Activated T-helper 2 cell treated with anti-CD3 and anti-CD28 coated beads, Interferon-gamma antibody, Interleukin-2, Interleukin-4, amounts not matched to agents 10 μg/mL and 5 μg/mL and 100 μg/mL, durations not matched to agents 14 hours and 24 hours and 36 hours (primary cell): ENCODE measurements at regions of chr1 and their contacts with region 1.

Region 1: GRCh38 chr1:171919891-171920887 is 78.9 kb downstream of the DNM3 start:
- DNase-seq: no peak
- H3K4me3 Mint-ChIP-seq: no peak overlapping the region
- H3K27ac Mint-ChIP-seq: no peak overlapping the region
- H3K4me1 Mint-ChIP-seq: peaks cover 6% of the 10 kb centered on the region
- H3K27me3 Mint-ChIP-seq: no peaks in the 10 kb centered on the region

Region 2: GRCh38 chr1:171877701-171878100 is 42.5 kb before region 1 on chr1:
- intact Hi-C with region 1: loop called (anchors 5 kb)
- DNase-seq: no peak
- H3K4me3 Mint-ChIP-seq: no peak overlapping the region
- H3K27ac Mint-ChIP-seq: no peak overlapping the region
- H3K4me1 Mint-ChIP-seq: peaks cover 3% of the 10 kb centered on the region
- H3K27me3 Mint-ChIP-seq: peaks cover 13% of the 10 kb centered on the region